ENCODE measurements at regions of chr14 and their contacts with region 1.

Region 1: DNA sequence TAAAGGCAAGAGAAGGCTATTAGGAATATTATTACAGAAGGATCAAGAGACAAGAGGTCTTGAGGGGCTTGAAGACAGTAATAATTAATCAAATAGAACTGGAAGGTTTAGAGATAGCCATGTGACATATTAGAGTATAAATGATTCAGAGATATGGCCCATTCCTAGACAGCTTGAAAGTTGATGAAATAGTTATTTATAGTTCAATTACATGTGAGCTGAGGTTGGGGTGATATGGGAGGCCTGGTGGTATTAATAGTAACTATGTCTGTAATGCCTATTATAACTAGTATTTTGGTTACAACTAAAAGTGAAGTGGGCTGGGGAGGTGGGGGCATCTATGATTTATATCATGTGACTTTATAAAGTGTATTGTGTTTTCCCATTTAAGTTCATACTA is 14.1 kb upstream of the MIS18BP1 start:
- DNase-seq: no peak
- H3K4me3 ChIP-seq: no peak overlapping the region
- H3K27ac ChIP-seq: no peak overlapping the region
- H3K4me1 ChIP-seq: no peaks in the 10 kb centered on the region
- H3K27me3 ChIP-seq: no peaks in the 10 kb centered on the region
- CTCF ChIP-seq: no peak
- POLR2A ChIP-seq: no peak

Region 2: GRCh38 chr14:44912041-44912869 is 354.8 kb before region 1 on chr14:
- intact Hi-C with region 1: loop called (anchors 5 kb)
- DNase-seq: no peak
- H3K4me3 ChIP-seq: peak overlapping the region; percentile 34 to 42
- H3K27ac ChIP-seq: no peak overlapping the region
- H3K4me1 ChIP-seq: no peaks in the 10 kb centered on the region
- H3K27me3 ChIP-seq: no peaks in the 10 kb centered on the region
- CTCF ChIP-seq: no peak
- POLR2A ChIP-seq: no peak

Region 3: GRCh38 chr14:45526715-45527549 is 259.9 kb after region 1 on chr14:
- intact Hi-C with region 1: no loop called
- DNase-seq: no peak
- H3K4me3 ChIP-seq: no peak overlapping the region
- H3K27ac ChIP-seq: no peak overlapping the region
- H3K4me1 ChIP-seq: no peaks in the 10 kb centered on the region
- H3K27me3 ChIP-seq: no peaks in the 10 kb centered on the region
- CTCF ChIP-seq: peak in 1 of 4 experiments; percentile 23
- POLR2A ChIP-seq: no peak

Measured in prostate gland (tissue), 2 donors.